ENCODE measurements at regions of chr2 and their contacts with region 1.

Region 1: DNA sequence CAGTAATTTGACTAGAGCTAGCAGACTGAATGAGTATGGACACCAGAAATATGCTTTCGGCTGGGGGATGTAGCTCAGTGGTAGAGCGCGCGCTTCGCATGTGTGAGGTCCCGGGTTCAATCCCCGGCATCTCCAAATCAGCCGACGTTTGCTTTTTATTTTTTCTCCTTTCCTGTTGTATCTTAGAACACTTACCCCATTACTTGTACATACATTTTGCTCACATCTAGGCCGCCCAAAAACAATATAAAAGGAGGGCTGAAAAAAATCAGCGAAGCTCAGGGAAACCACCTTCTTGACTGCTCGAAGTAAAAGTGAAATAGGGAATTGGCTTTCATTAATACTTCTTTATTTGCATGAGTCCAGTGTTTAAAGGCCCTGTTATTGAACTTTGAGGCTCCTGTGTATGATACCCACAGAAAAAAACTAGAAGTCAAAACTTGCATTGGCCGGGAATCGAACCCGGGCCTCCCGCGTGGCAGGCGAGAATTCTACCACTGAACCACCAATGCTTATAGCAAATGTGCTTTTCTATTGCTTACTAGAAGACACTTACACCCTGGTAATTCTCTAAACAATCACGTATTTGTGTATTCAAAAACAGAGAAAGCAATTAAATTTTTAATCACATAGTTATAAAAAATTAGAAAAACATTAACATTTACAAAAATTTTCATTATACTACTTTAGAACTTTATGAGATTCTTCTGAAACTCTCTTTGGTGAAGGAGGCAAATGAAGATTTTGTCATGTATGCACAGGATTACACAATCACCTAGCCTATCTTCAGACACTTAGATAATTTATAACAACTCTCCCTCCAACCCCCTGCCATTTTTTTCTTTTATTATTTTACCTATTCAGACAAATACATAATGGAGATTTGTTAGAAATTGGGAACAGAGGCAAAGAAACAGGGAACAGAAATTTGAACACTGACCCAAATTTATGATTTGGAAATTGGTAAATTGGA is 35.2 kb upstream of the GPD2 start:
- H3K4me3 ChIP-seq: peak overlapping the region; percentile 77
- H3K27ac ChIP-seq: peak overlapping the region; percentile 6; the same call in 1 of the 2 replicates
- H3K4me1 ChIP-seq: no peaks in the 10 kb centered on the region
- CTCF ChIP-seq: no peak

Region 2: GRCh38 chr2:156038021-156038420 is 363.0 kb before region 1 on chr2:
- CTCF ChIA-PET with region 1: no interaction called
- POLR2A ChIA-PET with region 1: no interaction called
- H3K4me3 ChIP-seq: no peak overlapping the region
- H3K27ac ChIP-seq: no peak overlapping the region
- H3K4me1 ChIP-seq: no peaks in the 10 kb centered on the region
- CTCF ChIP-seq: no peak

Region 3: DNA sequence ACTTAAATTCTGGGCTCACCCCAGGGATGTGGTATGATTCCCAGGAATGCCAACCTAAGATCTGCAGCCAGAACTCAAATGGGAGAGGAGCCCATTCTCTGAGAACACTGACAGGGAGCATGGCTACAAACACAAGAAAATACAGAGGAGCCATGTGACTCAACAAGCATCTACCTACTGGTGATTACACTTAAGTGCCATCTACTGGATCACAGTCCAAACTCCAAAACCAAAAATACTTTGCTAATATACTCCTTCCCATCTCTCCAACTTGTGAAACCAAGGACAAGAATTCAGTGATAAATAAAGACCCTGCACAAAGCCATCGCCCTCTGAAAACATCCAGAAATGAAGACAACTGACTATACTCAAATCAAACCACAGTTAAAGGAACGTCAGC is 185.3 kb before region 1 on chr2:
- CTCF ChIA-PET with region 1: no interaction called
- POLR2A ChIA-PET with region 1: no interaction called
- H3K4me3 ChIP-seq: no peak overlapping the region
- H3K27ac ChIP-seq: no peak overlapping the region
- H3K4me1 ChIP-seq: no peaks in the 10 kb centered on the region
- CTCF ChIP-seq: no peak

Region 4: GRCh38 chr2:156341452-156342253 is 59.3 kb before region 1 on chr2:
- CTCF ChIA-PET with region 1: interaction called, 4 read pairs
- POLR2A ChIA-PET with region 1: interaction called, 11 read pairs
- H3K4me3 ChIP-seq: peak overlapping the region; percentile 81
- H3K27ac ChIP-seq: peak overlapping the region; percentile 98
- H3K4me1 ChIP-seq: peaks cover 7% of the 10 kb centered on the region; the same call in 1 of the 2 replicates
- CTCF ChIP-seq: no peak